Common myeloid progenitor, CD34-positive (primary cell): ENCODE measurements at regions of chr17 and their contacts with region 1.

Region 1: DNA sequence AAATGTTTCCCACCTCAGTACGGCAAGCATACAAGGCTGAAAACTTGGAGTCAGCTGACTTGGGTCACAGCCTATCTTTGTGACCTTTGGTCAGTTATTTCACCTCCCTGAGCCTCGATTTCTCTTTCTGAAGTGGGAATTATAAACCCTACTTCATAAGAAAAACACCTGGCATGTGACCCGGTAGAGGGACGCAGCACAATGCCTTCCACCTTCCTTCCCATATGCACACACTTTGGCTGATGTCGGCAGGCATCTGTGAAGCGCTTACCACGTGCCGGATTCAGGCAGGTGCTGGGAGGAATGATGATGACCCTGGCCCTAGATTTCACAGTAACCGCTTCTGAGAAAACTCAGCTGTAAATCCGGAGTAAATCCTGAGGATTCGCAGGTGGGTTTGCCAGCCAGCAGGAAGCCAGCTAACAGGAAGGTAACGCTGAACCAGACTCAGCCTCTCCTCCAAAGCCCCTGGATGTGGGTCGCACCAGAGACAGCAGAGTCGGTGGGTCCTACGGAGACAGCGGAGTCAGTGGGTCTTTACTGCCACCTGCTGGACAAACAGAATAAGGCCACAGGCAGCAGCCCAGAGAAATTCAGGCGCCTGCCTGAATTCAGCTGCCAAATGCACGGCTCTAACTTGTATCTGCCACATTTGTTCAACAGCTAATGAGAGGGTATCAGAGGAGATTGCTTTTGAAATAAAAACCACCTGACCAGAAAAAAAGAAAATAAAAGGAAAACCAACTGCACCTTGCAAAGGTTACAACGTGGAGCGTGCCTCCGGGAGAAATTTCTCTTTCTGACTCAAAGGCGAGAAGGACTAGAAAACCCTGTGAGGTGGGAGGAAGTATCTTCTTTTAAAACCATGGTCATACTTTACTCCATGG is 16.6 kb downstream of the COPRS start:
- DNase-seq: peak; percentile 68 to 87 (median 78)
- H3K4me3 ChIP-seq: peak overlapping the region in 2 of 7 experiments; percentile 20 to 50
- H3K27ac ChIP-seq: no peak overlapping the region
- H3K4me1 ChIP-seq: peaks cover 0 to 11% (median 4%) of the 10 kb centered on the region in 4 experiments
- H3K27me3 ChIP-seq: no peaks in the 10 kb centered on the region

Region 2: GRCh38 chr17:31524926-31525800 is 317.3 kb before region 1 on chr17:
- CTCF ChIA-PET with region 1: interaction called, 11 read pairs
- POLR2A ChIA-PET with region 1: no interaction called
- DNase-seq: peak; percentile 68 to 80 (median 75)
- H3K4me3 ChIP-seq: no peak overlapping the region
- H3K27ac ChIP-seq: no peak overlapping the region
- H3K4me1 ChIP-seq: peaks cover 0 to 4% (median 0%) of the 10 kb centered on the region in 4 experiments
- H3K27me3 ChIP-seq: no peaks in the 10 kb centered on the region

Region 3: DNA sequence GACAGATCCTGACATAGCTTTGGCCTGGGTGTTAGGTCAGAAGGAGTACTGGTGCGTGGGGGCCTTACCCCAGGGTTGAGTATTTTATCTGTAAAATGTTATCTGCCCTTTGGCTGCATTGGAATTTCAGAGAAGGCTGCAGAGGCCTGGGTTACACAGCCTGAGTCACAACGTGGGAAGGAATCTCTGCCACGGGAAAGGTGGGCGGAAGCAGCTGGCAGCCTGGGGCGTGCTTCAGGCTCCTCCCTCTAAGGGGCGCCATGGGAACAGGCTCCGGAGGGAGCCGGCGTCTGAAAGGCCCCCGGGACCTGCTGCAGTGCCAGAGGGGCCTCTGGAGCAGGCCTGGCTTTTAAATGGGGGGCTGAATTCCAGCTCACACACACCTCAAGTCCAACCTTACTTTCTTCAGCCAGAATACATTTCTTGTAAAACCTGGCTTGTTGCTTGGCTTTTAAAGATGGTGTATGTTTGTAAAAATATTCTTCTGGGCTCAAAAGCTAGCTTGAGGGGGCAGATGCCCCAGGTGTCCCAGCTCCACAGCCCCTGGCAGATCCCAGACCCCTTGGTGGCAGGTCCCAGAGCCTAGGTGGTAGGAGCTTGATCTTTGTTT is 308.8 kb before region 1 on chr17:
- CTCF ChIA-PET with region 1: interaction called, 53 read pairs
- POLR2A ChIA-PET with region 1: no interaction called
- DNase-seq: peak in 2 of 3 donors; percentile 47 to 61
- H3K4me3 ChIP-seq: no peak overlapping the region
- H3K27ac ChIP-seq: no peak overlapping the region
- H3K4me1 ChIP-seq: peaks cover 9 to 49% (median 45%) of the 10 kb centered on the region in 4 experiments
- H3K27me3 ChIP-seq: no peaks in the 10 kb centered on the region

Region 4: GRCh38 chr17:31558748-31559644 is 283.4 kb before region 1 on chr17:
- CTCF ChIA-PET with region 1: interaction called, 16 read pairs
- POLR2A ChIA-PET with region 1: interaction called, 3 read pairs
- DNase-seq: peak; percentile 47 to 68 (median 63)
- H3K4me3 ChIP-seq: peak overlapping the region; percentile 9 to 76 (median 53)
- H3K27ac ChIP-seq: no peak overlapping the region
- H3K4me1 ChIP-seq: peaks cover 3 to 36% (median 29%) of the 10 kb centered on the region in 4 experiments
- H3K27me3 ChIP-seq: peaks cover 2 to 19% (median 5%) of the 10 kb centered on the region in 5 experiments

Region 5: DNA sequence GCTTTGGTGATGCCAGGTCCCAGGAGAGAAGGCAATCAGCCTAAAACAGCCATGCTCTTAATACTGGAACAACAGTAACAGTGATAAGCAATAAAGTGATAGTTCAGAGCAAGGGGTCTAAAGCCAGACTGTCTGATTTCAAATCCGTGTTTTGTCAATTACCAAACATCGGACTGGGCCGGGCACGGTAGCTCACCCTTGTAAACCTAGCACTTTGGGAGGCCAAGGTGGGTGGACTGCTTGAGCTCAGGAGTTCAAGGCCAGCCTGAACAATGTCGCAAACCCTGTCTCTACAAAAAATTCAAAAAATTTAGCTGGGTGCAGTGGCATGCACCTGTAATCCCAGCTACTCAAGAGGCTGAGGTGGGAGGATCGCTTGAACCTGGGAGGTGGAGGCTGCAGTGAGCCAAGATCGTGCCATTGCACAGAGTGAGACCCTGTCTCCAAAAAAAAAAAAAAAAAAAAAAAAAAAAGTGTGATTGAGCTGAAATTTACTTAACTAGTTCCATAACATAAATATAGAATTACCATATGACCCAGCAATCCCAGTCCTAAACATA is 11.6 kb after region 1 on chr17:
- CTCF ChIA-PET with region 1: interaction called, 18 read pairs
- POLR2A ChIA-PET with region 1: no interaction called
- DNase-seq: no peak
- H3K4me3 ChIP-seq: no peak overlapping the region
- H3K27ac ChIP-seq: no peak overlapping the region
- H3K4me1 ChIP-seq: peaks cover 0 to 14% (median 10%) of the 10 kb centered on the region in 4 experiments
- H3K27me3 ChIP-seq: no peaks in the 10 kb centered on the region

Region 6: DNA sequence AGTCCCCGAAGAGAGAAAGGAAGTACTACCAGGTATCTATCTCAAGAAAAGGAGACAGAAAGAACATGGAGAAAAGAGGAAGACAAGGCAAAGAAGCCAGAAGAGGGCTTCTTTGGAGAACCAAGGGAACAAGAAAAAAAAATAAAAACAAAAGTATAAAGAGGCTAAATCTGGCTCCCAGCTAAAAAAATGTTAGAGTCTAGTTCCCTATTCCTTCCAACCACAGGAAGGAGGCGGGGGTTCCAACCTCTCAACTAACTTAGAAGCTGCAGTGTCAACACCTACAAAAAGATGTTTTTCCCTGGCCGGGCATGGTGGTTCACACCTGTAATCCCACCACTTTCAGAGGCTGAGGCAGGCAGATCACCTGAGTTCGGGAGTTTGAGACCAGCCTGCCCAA is 45.7 kb after region 1 on chr17:
- CTCF ChIA-PET with region 1: no interaction called
- POLR2A ChIA-PET with region 1: no interaction called
- DNase-seq: peak; percentile 74 to 92 (median 92)
- H3K4me3 ChIP-seq: peak overlapping the region in 4 of 7 experiments; percentile 19 to 37 (median 22)
- H3K27ac ChIP-seq: peak overlapping the region; percentile 28 to 54
- H3K4me1 ChIP-seq: peaks cover 4 to 35% (median 26%) of the 10 kb centered on the region in 4 experiments
- H3K27me3 ChIP-seq: no peaks in the 10 kb centered on the region

Region 7: DNA sequence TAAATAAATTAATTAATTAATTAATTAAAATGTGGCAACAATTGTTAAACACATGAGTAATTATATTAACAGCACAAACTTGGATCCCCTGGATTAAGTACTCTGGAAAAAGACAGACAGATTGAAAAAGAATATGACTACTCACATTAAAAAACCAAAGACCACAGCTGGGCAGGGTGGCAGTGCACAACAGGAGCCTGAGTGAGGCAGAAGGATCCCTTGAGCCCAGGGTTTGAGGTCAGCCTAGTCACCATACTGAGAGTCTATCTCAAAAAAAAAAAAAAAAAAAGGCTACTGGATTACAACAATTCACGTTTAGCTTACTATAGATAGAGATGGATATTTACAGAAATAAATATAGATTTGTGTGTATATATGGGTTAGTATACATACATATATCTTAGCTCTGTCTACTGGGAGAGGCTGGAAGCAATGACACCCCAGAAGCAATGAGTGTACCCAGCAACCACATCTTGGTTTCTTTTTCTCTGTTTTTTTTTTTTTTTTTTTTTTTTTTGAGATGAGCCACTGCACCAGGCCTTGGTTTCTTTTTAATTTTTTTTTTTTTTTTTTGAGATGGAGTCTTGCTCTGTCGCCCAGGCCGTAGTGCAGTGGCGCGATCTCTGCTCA is 83.8 kb after region 1 on chr17:
- CTCF ChIA-PET with region 1: no interaction called
- POLR2A ChIA-PET with region 1: no interaction called
- DNase-seq: no peak
- H3K4me3 ChIP-seq: no peak overlapping the region
- H3K27ac ChIP-seq: no peak overlapping the region
- H3K4me1 ChIP-seq: peaks cover 0 to 8% (median 5%) of the 10 kb centered on the region in 4 experiments
- H3K27me3 ChIP-seq: no peaks in the 10 kb centered on the region